ENCODE measurements at regions of chr4 and their contacts with region 1.

Region 1: GRCh38 chr4:15396157-15396800 is 31.6 kb upstream of the C1QTNF7 start:
- DNase-seq: peak; percentile 87
- H3K4me3 Mint-ChIP-seq: no peak overlapping the region
- H3K27ac Mint-ChIP-seq: no peak overlapping the region
- H3K4me1 Mint-ChIP-seq: peaks cover 9% of the 10 kb centered on the region
- H3K27me3 Mint-ChIP-seq: no peaks in the 10 kb centered on the region

Region 2: GRCh38 chr4:15202481-15202880 is 193.8 kb before region 1 on chr4:
- intact Hi-C with region 1: no loop called
- DNase-seq: no peak
- H3K4me3 Mint-ChIP-seq: no peak overlapping the region
- H3K27ac Mint-ChIP-seq: no peak overlapping the region
- H3K4me1 Mint-ChIP-seq: no peaks in the 10 kb centered on the region
- H3K27me3 Mint-ChIP-seq: no peaks in the 10 kb centered on the region

Region 3: GRCh38 chr4:15231265-15232091 is 164.8 kb before region 1 on chr4:
- intact Hi-C with region 1: loop called (anchors 1 kb)
- DNase-seq: peak; percentile 91
- H3K4me3 Mint-ChIP-seq: no peak overlapping the region
- H3K27ac Mint-ChIP-seq: no peak overlapping the region
- H3K4me1 Mint-ChIP-seq: peaks cover 24% of the 10 kb centered on the region
- H3K27me3 Mint-ChIP-seq: peaks cover 1% of the 10 kb centered on the region

Region 4: GRCh38 chr4:15238720-15239119 is 157.6 kb before region 1 on chr4:
- intact Hi-C with region 1: loop called (anchors 1 kb)
- DNase-seq: peak; percentile 74
- H3K4me3 Mint-ChIP-seq: no peak overlapping the region
- H3K27ac Mint-ChIP-seq: no peak overlapping the region
- H3K4me1 Mint-ChIP-seq: peaks cover 13% of the 10 kb centered on the region
- H3K27me3 Mint-ChIP-seq: peaks cover 2% of the 10 kb centered on the region

Region 5: DNA sequence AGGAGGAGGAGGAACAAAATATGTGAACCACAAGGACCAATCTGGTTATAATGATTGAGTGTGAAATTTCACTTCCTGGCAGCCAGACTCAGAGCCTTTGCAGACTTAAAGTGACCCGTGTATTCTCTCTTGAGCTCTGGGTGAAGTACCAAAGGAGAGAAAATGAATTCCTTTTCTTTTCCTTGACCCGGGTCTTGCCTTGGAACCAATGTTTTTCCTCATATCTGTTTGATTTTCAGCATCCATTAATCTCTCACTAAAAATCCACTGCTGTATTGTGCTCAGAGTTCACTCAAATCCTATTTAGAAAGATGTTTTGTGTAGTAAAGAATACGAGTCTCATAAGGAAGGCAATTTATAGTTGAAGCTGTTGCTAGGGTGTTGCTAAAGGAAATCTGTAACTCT is 46.7 kb before region 1 on chr4:
- intact Hi-C with region 1: loop called (anchors 5 kb)
- DNase-seq: no peak
- H3K4me3 Mint-ChIP-seq: no peak overlapping the region
- H3K27ac Mint-ChIP-seq: no peak overlapping the region
- H3K4me1 Mint-ChIP-seq: peaks cover 6% of the 10 kb centered on the region
- H3K27me3 Mint-ChIP-seq: peaks cover 8% of the 10 kb centered on the region

Region 6: DNA sequence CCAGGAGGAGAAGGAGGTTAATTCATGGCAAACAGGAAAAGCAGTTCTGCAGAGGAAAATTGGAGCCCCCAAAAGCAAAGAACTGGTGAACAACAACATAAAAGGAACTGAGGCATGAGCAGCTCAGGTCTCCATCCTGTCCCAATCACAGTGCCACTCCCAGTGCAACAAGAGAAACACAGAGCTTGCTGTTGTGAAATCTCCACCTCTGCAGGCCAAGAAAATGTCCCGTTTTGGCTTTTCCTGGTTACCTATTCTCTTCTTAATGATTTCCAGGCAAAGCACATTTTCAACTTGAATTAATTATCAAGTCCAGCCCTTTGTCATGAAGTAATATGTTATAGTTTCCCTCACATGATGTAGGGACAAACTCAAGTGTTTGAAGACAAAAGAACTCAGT is 32.3 kb after region 1 on chr4:
- intact Hi-C with region 1: no loop called
- DNase-seq: no peak
- H3K4me3 Mint-ChIP-seq: no peak overlapping the region
- H3K27ac Mint-ChIP-seq: no peak overlapping the region
- H3K4me1 Mint-ChIP-seq: peaks cover 14% of the 10 kb centered on the region
- H3K27me3 Mint-ChIP-seq: no peaks in the 10 kb centered on the region

Region 7: DNA sequence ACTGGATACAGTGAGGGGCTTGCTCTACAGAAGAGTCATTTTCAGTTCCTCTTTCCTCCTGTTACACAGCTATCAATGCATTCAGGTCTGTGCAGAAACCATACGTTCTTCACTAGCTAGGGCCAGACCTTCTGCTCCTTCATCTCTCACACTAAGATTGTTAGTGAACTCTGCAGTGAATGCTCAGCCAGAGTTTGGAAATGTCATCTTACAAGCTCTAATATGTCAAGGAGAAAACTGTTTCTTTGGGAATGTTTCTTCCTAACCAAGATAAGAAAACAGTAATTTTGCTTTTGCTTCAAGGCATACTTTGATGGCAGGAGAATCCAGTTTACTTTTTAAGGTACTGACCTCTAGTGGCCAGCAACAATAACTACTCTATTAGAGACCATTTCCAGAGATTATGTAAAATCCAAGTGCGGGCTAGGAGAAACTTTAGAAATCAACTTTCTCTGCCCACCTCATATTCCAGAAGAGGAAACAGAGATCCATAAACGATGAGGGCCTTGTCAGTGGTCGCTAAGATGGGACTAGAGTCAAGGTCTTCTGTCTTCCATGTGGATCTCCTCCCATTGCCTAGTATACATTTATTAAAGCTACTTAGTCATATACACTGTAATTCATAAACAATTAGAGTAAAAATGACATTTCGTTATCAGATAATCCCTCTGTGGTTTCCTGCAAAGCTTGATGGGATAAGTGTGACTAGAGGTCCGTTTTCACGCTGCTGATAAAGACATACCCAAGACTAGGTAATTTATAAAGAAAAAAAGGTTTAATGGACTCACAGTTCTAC is 61.3 kb after region 1 on chr4:
- intact Hi-C with region 1: loop called (anchors 5 kb)
- DNase-seq: peak; percentile 59
- H3K4me3 Mint-ChIP-seq: no peak overlapping the region
- H3K27ac Mint-ChIP-seq: no peak overlapping the region
- H3K4me1 Mint-ChIP-seq: no peaks in the 10 kb centered on the region
- H3K27me3 Mint-ChIP-seq: peaks cover 24% of the 10 kb centered on the region

Measured in activated CD4-positive, alpha-beta T cell treated with anti-CD3 and anti-CD28 coated beads, Interleukin-2, amount 10 ng/mL, durations not matched to agents 24 days and 14 days (primary cell).